Caco-2 (cell line): ENCODE measurements at regions of chr1 and their contacts with region 1.

Region 1: DNA sequence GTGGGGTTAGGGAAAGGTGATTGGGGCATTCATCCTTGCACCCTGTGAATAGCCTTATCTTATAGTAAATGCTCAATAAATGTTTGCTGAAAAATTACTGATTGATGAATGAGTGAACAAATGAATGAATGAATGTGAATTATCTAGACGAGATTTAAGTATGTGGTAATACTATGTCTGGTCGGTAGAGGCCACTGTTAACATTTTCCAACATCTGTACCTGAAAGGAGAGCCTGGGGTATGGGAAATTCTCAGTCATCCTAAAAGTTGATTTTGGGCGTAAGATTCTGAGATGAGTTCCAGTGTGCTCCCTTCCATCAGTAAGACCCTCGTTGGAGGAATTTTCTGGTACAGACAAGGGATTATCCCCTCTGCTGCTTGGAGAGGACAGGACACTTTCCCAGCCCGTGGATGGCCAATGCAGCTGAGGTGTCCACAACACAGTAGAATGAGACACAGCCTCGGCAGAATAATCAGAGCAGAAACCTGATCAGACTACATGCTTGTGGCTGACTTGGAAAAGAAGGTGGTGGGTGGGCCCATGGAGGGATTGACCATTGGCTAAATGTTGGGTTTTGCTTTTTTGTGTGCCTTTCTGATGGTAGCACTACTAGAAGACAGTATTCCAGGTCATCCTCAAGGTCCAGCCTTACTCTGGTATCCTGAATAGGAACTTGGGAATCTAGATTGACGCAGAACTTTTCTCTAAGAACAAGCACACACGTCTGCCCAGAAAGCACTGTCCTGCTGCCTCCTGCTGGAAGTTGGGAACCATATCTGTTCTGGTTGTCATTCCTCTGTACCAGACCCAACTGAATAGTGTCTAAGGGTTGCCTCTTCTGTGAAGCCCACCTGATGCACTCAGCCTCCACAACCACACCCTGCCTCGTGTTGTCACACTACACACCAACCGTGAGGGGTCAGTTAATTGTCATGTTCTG is 262.0 kb downstream of the TNR start:
- DNase-seq: peak in 1 of 2 experiments; percentile 24
- H3K4me3 ChIP-seq: no peak overlapping the region
- H3K4me3 Mint-ChIP-seq: no peak overlapping the region
- H3K27ac Mint-ChIP-seq: no peak overlapping the region
- H3K4me1 ChIP-seq: no peaks in the 10 kb centered on the region
- H3K4me1 Mint-ChIP-seq: no peaks in the 10 kb centered on the region
- H3K27me3 ChIP-seq: no peaks in the 10 kb centered on the region; the same call in 1 of the 2 replicates
- H3K27me3 Mint-ChIP-seq: peaks cover 17% of the 10 kb centered on the region
- CTCF ChIP-seq: peak; percentile 48 to 53

Region 2: DNA sequence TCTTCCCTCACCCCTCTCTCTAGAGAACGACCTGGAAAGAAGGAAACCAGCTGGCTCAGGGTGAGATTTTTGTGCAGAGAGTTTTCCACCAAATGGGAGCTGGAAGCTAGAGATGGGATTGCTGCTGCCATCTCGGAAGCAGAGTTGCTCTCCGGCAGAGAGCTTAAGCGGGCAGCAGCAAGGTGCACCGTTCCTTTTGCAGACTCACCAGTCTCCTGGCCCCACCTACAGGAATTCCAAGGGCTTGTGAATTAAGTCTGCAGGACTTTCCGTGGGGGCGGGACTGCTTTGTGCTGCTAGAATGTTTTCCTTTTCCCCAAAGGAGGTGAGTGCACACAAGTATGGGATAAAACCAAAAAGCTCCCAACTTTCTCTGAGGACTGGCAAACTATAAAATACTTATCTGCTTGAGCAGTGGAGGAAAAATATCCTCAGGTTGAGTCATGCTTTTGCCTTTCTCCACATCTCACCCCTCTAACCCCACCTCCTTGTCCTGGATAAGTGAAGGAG is 259.7 kb before region 1 on chr1:
- CTCF ChIA-PET with region 1: no interaction called
- POLR2A ChIA-PET with region 1: no interaction called
- intact Hi-C with region 1: no loop called
- DNase-seq: peak; percentile 12 to 48
- H3K4me3 ChIP-seq: no peak overlapping the region
- H3K4me3 Mint-ChIP-seq: no peak overlapping the region
- H3K27ac Mint-ChIP-seq: no peak overlapping the region
- H3K4me1 ChIP-seq: 0 out of 2 replicates have a peak, but pooled peaks cover 5% of the 10 kb centered on the region
- H3K4me1 Mint-ChIP-seq: peaks cover 26% of the 10 kb centered on the region
- H3K27me3 ChIP-seq: no peaks in the 10 kb centered on the region
- H3K27me3 Mint-ChIP-seq: no peaks in the 10 kb centered on the region
- CTCF ChIP-seq: peak in 1 of 2 experiments; percentile 15

Region 3: DNA sequence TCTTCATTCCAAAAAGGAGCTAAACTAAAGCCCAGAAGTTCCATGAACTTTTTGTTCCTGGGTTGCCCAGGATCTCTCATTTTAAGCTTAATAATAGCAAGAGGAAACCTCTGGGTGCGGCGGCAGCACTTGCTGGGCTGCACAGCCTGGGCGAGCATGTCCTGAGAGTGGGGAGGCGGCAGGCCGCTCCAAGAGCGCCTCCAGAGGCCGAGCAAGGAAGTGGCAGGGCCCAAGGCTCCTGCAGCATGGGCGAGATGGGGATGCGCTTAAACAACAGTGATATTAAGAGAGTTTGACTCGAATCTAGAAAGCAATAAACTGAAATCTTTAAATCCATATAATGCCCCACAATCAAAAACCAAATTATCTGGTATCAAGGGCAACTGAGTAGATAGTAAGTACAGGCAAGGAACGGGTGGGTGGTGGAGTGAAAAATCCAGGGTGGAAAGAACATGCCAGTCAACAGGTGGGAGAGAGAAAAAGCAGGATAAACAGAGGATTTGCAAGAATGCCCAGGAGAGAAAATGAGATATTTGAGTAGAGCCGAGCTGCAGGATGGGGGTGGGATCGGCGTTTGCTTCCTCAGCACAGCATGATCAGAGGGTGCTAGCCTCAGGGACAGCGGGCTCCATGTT is 276.1 kb after region 1 on chr1:
- CTCF ChIA-PET with region 1: no interaction called
- POLR2A ChIA-PET with region 1: no interaction called
- intact Hi-C with region 1: loop called (anchors 10 kb)
- DNase-seq: peak in 1 of 2 experiments; percentile 60
- H3K4me3 ChIP-seq: no peak overlapping the region
- H3K4me3 Mint-ChIP-seq: no peak overlapping the region
- H3K27ac Mint-ChIP-seq: no peak overlapping the region
- H3K4me1 ChIP-seq: no peaks in the 10 kb centered on the region
- H3K4me1 Mint-ChIP-seq: no peaks in the 10 kb centered on the region
- H3K27me3 ChIP-seq: no peaks in the 10 kb centered on the region
- H3K27me3 Mint-ChIP-seq: peaks cover 20% of the 10 kb centered on the region
- CTCF ChIP-seq: peak; percentile 82 to 84